ENCODE measurements at regions of chr2 and their contacts with region 1.

Region 1: GRCh38 chr2:28117104-28117596 is 226.6 kb downstream of the BABAM2 start:
- DNase-seq: no peak
- ATAC-seq: peak in 3 of 4 donors; percentile 43 to 69 (median 54)
- H3K4me3 ChIP-seq: no peak overlapping the region
- H3K27ac ChIP-seq: no peak overlapping the region
- H3K4me1 ChIP-seq: peaks cover 0 to 19% (median 5%) of the 10 kb centered on the region in 12 donors
- H3K27me3 ChIP-seq: no peaks in the 10 kb centered on the region
- CTCF ChIP-seq: no peak
- POLR2A ChIP-seq: no peak

Region 2: DNA sequence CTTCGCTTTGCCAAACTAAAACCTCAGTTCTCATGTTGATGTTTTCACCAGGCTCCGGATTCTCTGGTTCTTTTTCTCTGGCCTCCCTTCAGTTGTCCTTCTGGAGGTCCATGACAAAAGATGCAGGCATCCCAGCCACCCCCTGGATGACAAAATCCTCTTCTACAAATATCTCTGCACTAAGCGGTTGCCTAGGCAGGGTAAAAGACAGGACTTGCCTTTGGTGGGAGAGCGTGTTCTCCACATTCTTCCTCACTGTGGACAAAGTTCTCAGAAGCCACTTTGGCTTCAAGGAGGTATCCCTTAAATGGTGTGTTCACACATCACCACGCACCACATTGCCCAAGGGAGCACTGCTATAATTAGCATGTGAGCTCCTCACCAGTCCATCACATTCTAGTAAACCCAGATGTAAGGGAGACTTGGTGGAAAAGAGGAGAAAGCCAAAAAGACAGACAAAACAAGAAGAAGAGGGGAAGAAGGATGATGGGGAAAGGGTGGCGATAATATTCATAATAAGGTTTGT is 369.3 kb before region 1 on chr2:
- intact Hi-C with region 1: loop called in 1 of 10 experiments (anchors 10 kb)
- DNase-seq: no peak
- ATAC-seq: peak in 3 of 4 donors; percentile 84 to 88 (median 85)
- H3K4me3 ChIP-seq: no peak overlapping the region
- H3K27ac ChIP-seq: no peak overlapping the region
- H3K4me1 ChIP-seq: peaks cover 0 to 11% (median 0%) of the 10 kb centered on the region in 12 donors
- H3K27me3 ChIP-seq: no peaks in the 10 kb centered on the region
- CTCF ChIP-seq: no peak
- POLR2A ChIP-seq: no peak

Region 3: DNA sequence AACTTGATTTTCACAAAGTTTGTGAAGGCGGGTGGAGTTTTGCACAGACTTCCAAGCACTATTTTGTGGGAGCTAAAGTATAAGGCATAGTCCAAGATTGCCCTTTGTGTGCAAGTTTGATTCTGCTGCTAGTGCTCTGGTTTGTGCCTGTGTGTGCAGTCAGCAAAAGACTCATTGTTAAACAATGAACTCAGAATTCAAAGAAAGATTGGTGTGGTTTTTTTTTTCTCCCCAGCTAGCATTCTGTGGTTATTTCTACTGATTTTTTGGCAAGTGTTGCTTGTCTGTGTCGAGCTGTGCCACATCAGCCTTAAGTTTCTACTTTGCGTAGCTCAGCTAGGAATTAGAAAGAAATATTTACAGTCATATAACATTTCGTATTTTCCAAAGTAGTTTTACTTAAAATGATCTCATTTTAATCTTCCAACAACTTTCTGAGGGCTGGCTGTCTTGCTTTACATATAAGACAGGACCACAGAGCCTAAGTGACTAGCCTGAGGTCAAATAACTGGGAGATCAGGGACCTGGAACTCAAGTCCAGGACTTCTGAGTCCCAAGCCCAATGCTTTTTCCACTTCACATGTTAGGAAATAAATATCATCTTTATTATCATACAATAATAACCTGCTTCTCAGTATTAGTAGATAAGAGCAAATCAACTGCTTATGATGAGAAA is 156.8 kb before region 1 on chr2:
- intact Hi-C with region 1: loop called in 1 of 10 experiments (anchors 10 kb)
- DNase-seq: no peak
- ATAC-seq: peak in 2 of 4 donors; percentile 29 to 44
- H3K4me3 ChIP-seq: no peak overlapping the region
- H3K27ac ChIP-seq: peak overlapping the region in 1 of 12 donors; percentile 73
- H3K4me1 ChIP-seq: peaks cover 0 to 64% (median 33%) of the 10 kb centered on the region in 12 donors
- H3K27me3 ChIP-seq: no peaks in the 10 kb centered on the region
- CTCF ChIP-seq: no peak
- POLR2A ChIP-seq: no peak

Region 4: DNA sequence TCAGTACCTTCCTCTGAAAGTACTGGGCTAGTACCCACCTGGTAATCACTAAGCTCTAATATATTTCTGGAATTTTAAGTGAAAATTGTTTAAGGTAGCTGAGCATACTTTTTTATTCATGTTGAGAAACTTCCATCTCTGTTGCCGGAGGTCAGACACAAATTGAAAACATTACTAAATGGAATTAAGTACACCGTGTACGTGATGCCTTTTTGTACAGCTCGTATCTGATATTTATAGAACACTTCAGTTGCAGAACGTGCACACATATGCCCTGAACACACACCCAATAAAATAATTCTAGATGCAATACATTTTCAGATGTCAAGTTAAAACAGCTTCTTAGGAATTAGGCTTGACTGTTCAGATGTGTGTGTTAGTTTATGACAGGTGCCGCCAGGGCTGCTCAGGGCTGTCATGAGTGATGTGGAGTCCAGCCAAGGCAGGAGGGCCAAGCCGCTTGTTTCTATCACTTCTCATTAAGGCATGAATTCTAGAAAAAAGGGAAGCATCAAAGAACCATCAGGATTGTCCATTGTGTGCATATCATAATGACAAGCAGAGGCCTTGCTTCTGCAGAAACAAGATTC is 194.6 kb after region 1 on chr2:
- intact Hi-C with region 1: no loop called
- DNase-seq: no peak
- ATAC-seq: peak; percentile 75 to 85 (median 82)
- H3K4me3 ChIP-seq: no peak overlapping the region
- H3K27ac ChIP-seq: peak overlapping the region in 7 of 12 donors; percentile 23 to 73 (median 48)
- H3K4me1 ChIP-seq: peaks cover 0 to 22% (median 5%) of the 10 kb centered on the region in 12 donors
- H3K27me3 ChIP-seq: no peaks in the 10 kb centered on the region
- CTCF ChIP-seq: no peak
- POLR2A ChIP-seq: no peak

Measured in heart left ventricle (tissue), 16 donors.